ENCODE measurements at regions of chr9 and their contacts with region 1.

Region 1: DNA sequence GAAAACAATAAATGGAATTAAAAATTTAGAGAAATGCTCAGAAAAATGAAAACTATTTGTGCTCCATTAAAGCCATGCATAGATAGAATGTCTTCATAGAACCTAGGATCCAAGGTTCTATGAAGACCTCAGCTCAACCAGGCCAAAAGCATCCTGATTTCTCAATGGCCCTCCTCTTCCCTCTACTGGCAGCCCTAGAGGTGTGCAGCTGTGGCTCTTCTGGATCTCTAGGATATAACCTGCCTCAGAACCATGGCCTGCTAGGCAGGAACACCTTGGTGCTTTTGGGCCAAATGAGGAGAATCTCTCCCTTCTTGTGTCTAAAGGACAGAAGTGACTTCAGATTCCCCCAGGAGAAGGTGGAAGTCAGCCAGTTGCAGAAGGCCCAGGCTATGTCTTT is 15.1 kb downstream of the IFNA1 start:
- DNase-seq: peak in 7 of 9 donors; percentile 16 to 51 (median 45)
- ATAC-seq: peak; percentile 85
- H3K4me3 ChIP-seq: no peak overlapping the region
- H3K4me3 Mint-ChIP-seq: no peak overlapping the region
- H3K27ac ChIP-seq: no peak overlapping the region
- H3K27ac Mint-ChIP-seq: no peak overlapping the region
- H3K4me1 ChIP-seq: no peaks in the 10 kb centered on the region
- H3K4me1 Mint-ChIP-seq: peaks cover 0 to under 1% (median 0%) of the 10 kb centered on the region in 7 donors
- H3K27me3 ChIP-seq: no peaks in the 10 kb centered on the region
- H3K27me3 Mint-ChIP-seq: peaks cover 0 to 48% (median 7%) of the 10 kb centered on the region in 5 donors

Region 2: DNA sequence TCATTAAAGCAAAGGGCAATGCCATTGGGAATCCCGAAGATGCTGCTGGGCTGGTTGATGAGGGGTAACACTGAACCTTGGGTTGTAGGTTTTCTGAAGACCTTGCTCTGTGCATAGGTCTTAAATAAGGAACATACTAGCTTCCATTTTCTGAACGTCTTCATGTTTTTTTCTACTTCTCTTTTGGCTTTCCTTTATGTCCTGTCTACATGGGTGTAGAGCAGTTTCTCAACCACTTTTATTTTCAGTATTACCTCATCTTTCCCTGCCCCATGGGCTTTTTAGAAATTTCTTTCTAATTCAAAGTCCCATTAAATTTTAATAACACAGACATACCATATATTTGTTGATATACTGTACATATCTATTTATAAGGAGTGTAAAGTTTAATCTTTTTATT is 215.4 kb before region 1 on chr9 and contains the start of gene IFNA14:
- CTCF ChIA-PET with region 1: interaction called, 3 read pairs
- POLR2A ChIA-PET with region 1: no interaction called
- intact Hi-C with region 1: loop called in 1 of 2 experiments (anchors 1 kb)
- DNase-seq: no peak
- ATAC-seq: no peak
- H3K4me3 ChIP-seq: no peak within 1 kb of the TSS
- H3K4me3 Mint-ChIP-seq: no peak within 1 kb of the TSS
- H3K27ac ChIP-seq: no peak within 1 kb of the TSS
- H3K27ac Mint-ChIP-seq: no peak within 1 kb of the TSS
- H3K4me1 ChIP-seq: peaks cover 0 to 5% of the 10 kb centered on the region in 2 donors
- H3K4me1 Mint-ChIP-seq: peaks cover 6 to 19% (median 12%) of the 10 kb centered on the region in 7 donors
- H3K27me3 ChIP-seq: peaks cover 0 to 2% of the 10 kb centered on the region in 2 donors
- H3K27me3 Mint-ChIP-seq: peaks cover 14 to 53% (median 15%) of the 10 kb centered on the region in 5 donors
- total RNA-seq, gene IFNA14: not detected

Region 3: DNA sequence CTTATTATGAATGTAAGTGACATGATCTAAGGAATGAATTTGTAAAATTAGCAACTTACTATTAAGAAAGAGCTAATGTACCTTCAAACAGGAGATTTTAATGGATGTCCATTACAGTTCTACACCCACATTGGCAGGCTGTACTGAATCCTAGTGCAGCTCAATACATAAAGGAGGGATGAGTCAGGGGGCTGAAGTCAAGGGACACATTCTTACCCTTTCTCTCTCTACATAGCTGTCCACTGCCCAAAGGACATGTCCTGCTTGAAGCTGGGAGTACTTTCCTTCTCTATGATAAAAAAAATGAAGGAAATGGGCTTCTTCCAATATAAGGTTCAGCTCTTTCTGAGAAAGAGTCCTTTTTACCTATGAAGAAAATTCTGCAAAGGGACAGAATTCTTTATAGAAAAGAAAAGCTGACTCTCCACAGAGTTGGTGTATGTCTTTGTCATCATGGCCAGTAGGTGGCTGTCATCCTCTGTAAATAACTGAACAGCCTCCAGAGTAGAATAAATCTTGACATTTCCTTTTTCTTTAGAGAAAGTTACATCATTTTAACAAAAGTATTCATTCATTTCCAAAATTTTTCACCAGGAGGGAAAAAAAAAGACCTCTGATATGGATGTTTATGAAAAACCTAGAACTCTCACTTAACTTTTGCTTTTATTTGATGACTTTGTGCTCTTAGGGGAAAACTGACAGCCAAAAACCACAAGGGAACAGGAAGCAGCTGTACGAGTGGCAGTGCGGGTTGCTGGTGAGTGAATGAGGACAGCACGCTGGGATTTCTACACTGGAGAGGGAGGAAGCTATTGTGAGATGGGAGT is 202.4 kb before region 1 on chr9:
- CTCF ChIA-PET with region 1: no interaction called
- POLR2A ChIA-PET with region 1: no interaction called
- intact Hi-C with region 1: loop called in 1 of 2 experiments (anchors 1 kb)
- DNase-seq: peak in 5 of 9 donors; percentile 7 to 23 (median 12)
- ATAC-seq: peak; percentile 78
- H3K4me3 ChIP-seq: no peak overlapping the region
- H3K4me3 Mint-ChIP-seq: peak overlapping the region in 6 of 10 donors; percentile 4 to 52 (median 21)
- H3K27ac ChIP-seq: no peak overlapping the region
- H3K27ac Mint-ChIP-seq: no peak overlapping the region
- H3K4me1 ChIP-seq: peaks cover 0 to 3% of the 10 kb centered on the region in 2 donors
- H3K4me1 Mint-ChIP-seq: peaks cover 4 to 14% (median 6%) of the 10 kb centered on the region in 7 donors
- H3K27me3 ChIP-seq: no peaks in the 10 kb centered on the region
- H3K27me3 Mint-ChIP-seq: peaks cover 4 to 60% (median 16%) of the 10 kb centered on the region in 5 donors

Region 4: GRCh38 chr9:21317956-21318923 is 137.1 kb before region 1 on chr9:
- CTCF ChIA-PET with region 1: interaction called, 5 read pairs
- POLR2A ChIA-PET with region 1: no interaction called
- intact Hi-C with region 1: loop called (anchors 1 kb)
- DNase-seq: peak in 6 of 9 donors; percentile 16 to 39 (median 28)
- ATAC-seq: peak; percentile 84
- H3K4me3 ChIP-seq: no peak overlapping the region
- H3K4me3 Mint-ChIP-seq: no peak overlapping the region
- H3K27ac ChIP-seq: no peak overlapping the region
- H3K27ac Mint-ChIP-seq: peak overlapping the region in 2 of 9 donors; percentile 54
- H3K4me1 ChIP-seq: no peaks in the 10 kb centered on the region
- H3K4me1 Mint-ChIP-seq: peaks cover 4 to 6% (median 5%) of the 10 kb centered on the region in 7 donors
- H3K27me3 ChIP-seq: no peaks in the 10 kb centered on the region
- H3K27me3 Mint-ChIP-seq: peaks cover 0 to 21% (median 0%) of the 10 kb centered on the region in 5 donors

Region 5: GRCh38 chr9:21434202-21435014 is 20.9 kb before region 1 on chr9:
- CTCF ChIA-PET with region 1: interaction called, 11 read pairs
- POLR2A ChIA-PET with region 1: no interaction called
- intact Hi-C with region 1: loop called (anchors 1 kb)
- DNase-seq: peak in 7 of 9 donors; percentile 20 to 60 (median 50)
- ATAC-seq: peak; percentile 62
- H3K4me3 ChIP-seq: no peak overlapping the region
- H3K4me3 Mint-ChIP-seq: no peak overlapping the region
- H3K27ac ChIP-seq: no peak overlapping the region
- H3K27ac Mint-ChIP-seq: no peak overlapping the region
- H3K4me1 ChIP-seq: no peaks in the 10 kb centered on the region
- H3K4me1 Mint-ChIP-seq: no peaks in the 10 kb centered on the region
- H3K27me3 ChIP-seq: no peaks in the 10 kb centered on the region
- H3K27me3 Mint-ChIP-seq: peaks cover 22 to 52% (median 34%) of the 10 kb centered on the region in 5 donors